ENCODE measurements at regions of chrX and their contacts with region 1.

Region 1: DNA sequence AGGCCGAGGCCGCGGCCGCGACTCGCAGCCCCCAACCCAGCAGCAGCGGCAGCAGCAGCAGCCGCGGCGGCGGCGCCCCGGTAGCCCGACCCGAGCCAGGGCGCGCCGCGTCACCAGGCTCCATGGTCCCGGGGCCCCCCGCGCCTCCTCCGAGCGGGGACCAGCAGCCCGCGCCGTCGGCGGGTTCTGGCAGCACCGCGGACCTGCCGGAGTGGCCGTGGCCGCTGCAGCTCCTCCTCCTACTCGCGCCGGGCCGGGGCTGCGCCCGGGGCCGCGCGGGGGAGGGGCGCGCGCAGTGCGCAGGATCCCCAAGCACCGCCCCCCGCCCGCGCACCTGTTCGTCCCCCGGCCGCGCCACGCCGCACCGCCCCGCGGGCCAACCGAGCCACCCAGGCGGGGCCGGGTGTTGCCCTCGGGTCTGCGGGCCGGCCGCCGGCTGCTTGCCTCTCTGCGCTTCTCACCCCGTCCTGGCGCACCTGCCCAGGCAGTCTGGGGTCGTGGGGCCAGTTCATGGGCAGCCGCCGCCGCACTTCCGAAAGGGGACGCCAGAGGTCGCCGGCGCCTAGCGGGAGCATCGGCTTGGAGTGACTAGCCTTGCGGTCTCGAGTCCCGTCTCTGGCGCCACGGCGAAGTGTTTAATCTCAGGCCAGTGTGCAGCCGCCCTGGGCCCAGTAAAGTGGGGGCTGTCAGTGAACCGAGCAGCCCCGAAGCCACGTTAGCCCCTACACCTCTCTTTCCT is at the start of gene SLC9A7:
- DNase-seq: peak; percentile 84
- ATAC-seq: peak; percentile 96
- total RNA-seq, gene SLC9A7: 4.4 TPM

Region 2: DNA sequence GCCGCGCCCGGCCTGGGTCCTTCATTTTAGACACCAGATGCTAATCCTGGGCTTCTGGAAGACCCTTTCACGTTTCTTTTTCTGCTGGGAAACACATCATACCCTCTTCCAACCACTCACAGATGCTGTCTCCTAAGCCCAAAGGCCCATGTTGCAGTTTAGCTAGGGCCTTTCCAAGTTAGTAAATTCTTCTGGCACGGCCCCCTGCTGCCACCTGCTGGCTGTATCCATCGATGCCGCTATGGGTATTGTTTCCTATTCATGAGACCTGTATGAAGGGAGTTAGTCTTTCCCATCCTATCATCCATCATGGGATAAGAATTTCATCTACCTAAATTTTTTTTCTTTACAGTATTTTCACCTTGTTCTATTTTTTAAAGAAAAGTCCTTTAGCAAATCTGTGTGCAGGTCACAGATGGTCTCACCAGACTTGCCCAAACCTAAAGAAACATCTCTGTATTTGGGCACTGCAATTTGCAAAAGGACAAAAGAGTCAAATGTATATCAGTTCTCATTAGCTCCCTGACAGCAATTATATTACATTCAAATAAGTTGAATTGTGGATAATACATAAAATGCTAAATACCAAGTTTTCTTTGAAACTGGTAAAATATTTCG is 37.6 kb after region 1 on chrX:
- intact Hi-C with region 1: loop called (anchors 5 kb)
- DNase-seq: peak; percentile 79
- ATAC-seq: peak; percentile 76

Region 3: DNA sequence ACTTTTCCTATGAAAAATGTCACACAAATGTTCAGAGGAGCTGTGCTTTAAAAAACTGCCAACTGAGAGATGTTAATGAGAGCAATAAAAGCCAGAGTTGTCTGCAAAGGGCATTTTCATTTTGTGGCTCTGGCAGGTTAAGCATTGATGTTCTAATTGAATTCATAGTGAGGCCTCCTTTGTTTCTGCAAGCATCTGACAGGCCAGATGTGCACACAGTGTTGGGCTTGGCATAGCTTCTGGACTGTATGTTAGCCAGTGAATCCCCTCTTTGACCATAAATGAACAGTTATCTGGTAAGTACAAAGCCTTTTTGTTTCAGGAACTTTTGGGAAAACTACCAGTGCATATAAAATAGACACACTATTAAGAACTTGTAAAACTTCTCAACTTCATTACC is 235.0 kb after region 1 on chrX:
- intact Hi-C with region 1: no loop called
- DNase-seq: no peak
- ATAC-seq: no peak

Region 4: DNA sequence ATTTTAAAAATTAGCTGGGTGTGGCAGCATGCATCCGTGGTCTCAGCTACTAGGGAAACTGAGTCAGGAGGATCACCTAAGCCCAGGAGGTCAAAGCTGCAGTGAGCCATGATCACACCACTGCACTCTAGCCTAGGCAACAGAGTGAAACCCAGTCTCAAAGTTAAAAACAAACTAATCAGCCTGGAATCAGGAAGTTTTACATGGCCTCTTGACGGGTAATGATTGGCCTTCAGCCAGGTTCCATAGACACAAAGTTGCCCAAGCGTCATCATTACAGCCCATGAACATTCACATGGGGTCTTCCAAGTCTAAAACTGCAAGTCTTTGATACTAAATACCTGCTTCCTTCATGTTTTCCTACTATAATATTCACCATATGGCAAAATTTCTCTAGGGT is 309.1 kb after region 1 on chrX:
- intact Hi-C with region 1: no loop called
- DNase-seq: no peak
- ATAC-seq: no peak

Measured in Right ventricle myocardium superior (tissue), 1 donor.